ENCODE measurements at regions of chr2 and their contacts with region 1.

Region 1: DNA sequence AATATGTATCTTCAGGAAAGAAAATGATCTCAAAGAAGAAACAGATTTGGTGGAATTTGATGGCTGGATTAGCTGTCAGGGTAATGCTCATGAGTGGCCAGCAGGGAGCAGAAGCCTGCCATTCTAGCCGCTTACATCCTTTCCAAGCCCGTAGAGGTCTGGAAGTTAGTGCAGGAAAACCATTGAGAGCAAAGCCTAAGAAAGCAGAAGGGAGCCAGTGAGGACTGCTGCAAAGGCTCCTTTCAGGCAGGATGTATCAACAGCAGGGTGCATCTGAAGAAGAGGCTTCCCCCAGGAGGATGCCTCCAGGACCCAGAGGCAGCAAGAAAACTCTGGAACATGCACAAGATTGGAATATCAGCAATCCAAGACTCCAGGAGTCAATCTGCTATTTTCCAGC is 22.9 kb upstream of the LBH start:
- DNase-seq: peak; percentile 57 to 77
- H3K4me3 ChIP-seq: no peak overlapping the region
- H3K27ac ChIP-seq: no peak overlapping the region
- H3K4me1 ChIP-seq: peaks cover 0 to 4% (median 2%) of the 10 kb centered on the region in 4 experiments; a peak in 3 of 7 replicates
- H3K27me3 ChIP-seq: no peaks in the 10 kb centered on the region
- CTCF ChIP-seq: peak; percentile 68 to 89 (median 86)
- EP300 ChIP-seq: no peak
- POLR2A ChIP-seq: no peak
- RAD21 ChIP-seq: peak; percentile 98 to 99

Region 2: DNA sequence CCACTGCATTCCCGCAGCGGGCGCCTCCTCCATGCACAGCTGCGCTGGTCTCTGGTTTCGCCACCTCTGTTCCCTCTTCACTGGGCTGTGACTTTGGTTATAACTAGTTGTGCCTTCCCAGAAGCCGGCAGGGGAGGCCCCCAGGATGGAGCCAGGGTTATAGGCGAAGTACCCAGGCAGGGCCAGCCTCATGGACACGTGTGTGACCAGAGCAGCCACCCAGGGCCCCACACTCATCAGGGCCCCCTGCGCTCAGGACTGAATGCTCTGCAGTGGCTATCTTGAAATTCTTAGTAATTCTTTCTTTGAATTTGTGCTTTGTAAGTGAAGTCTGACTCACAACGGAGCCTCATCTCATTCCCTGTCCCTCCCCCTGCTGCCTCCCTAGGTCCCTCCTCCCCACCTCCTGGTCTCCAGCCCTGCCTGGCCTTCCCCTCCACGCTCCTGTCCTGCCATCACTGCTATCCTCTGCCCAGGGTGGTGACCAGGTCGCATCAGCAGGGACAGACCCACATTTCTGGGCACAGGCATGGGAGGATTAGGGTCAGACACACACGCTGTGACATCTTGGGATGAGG is 15.3 kb before region 1 on chr2:
- CTCF ChIA-PET with region 1: interaction called, 11 read pairs
- POLR2A ChIA-PET with region 1: no interaction called
- DNase-seq: no peak
- H3K4me3 ChIP-seq: no peak overlapping the region
- H3K27ac ChIP-seq: no peak overlapping the region
- H3K4me1 ChIP-seq: peaks cover 0 to 11% (median 3%) of the 10 kb centered on the region in 4 experiments; a peak in 3 of 7 replicates
- H3K27me3 ChIP-seq: no peaks in the 10 kb centered on the region
- CTCF ChIP-seq: no peak
- EP300 ChIP-seq: no peak
- POLR2A ChIP-seq: no peak
- RAD21 ChIP-seq: no peak

Region 3: GRCh38 chr2:30231212-30231995 is 23.0 kb after region 1 on chr2 and contains the start of gene LBH:
- CTCF ChIA-PET with region 1: interaction called, 40 read pairs
- POLR2A ChIA-PET with region 1: interaction called, 15 read pairs
- DNase-seq: peak; percentile 66 to 78
- H3K4me3 ChIP-seq: peak within 1 kb of the TSS; percentile 67 to 81 (median 70)
- H3K27ac ChIP-seq: 0 out of 2 replicates have a peak within 1 kb of the TSS, but pooled peaks have one; percentile 7
- H3K4me1 ChIP-seq: peaks cover 0 to 9% (median 5%) of the 10 kb centered on the region in 4 experiments; a peak in 4 of 7 replicates
- H3K27me3 ChIP-seq: peaks cover 3 to 25% (median 20%) of the 10 kb centered on the region in 4 experiments
- CTCF ChIP-seq: no peak
- EP300 ChIP-seq: no peak
- POLR2A ChIP-seq: peak; percentile 95 to 97
- RAD21 ChIP-seq: no peak
- total RNA-seq, gene LBH: 24.6 and 25.7 TPM in 2 replicates

Region 4: DNA sequence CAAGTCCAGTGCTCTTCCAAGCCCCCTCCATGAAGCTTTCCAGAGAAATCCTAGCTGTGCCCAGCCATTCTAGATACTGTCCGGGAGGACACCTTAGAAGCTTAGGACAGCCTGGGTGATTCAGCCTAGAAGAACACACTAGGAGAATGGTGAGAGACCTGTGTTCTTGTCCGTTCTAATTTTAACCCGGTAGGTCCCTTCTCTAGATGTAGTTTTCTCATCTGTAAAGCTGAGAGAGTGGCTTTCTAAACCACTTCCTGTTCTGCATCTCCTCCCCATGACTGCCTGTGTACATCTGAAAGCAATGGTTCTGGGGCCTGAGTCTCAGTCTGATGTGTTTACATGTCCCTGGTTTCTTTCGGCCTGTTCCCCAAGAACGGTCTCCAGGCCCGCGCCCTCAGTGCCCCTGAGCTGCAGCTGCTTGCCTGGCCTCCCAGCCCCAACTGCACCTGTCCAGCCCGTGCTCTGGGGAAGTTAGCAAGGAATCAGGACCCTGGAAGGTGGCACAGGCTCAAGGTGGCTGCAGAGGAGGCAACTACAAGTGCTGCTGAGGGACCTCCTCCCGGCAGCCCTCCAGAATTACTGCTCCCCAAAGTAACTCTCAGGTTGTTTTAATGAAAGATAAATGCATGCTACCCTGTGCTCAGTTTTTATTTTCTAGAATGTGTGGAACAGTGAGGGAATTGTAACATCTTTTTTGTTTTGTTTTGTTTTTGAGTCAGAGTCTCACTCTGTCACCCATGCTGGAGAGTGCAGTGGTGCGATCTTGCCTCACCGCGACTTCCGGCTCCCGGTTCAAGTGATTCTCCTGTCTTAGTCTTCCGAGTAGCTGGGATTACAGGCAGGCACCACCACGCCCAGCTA is 128.8 kb after region 1 on chr2:
- CTCF ChIA-PET with region 1: interaction called, 17 read pairs
- POLR2A ChIA-PET with region 1: no interaction called
- DNase-seq: no peak
- H3K4me3 ChIP-seq: no peak overlapping the region
- H3K27ac ChIP-seq: no peak overlapping the region
- H3K4me1 ChIP-seq: peaks cover 0 to 3% (median 0%) of the 10 kb centered on the region in 4 experiments; a peak in 2 of 7 replicates
- H3K27me3 ChIP-seq: no peaks in the 10 kb centered on the region
- CTCF ChIP-seq: no peak
- EP300 ChIP-seq: no peak
- POLR2A ChIP-seq: no peak
- RAD21 ChIP-seq: no peak

Region 5: DNA sequence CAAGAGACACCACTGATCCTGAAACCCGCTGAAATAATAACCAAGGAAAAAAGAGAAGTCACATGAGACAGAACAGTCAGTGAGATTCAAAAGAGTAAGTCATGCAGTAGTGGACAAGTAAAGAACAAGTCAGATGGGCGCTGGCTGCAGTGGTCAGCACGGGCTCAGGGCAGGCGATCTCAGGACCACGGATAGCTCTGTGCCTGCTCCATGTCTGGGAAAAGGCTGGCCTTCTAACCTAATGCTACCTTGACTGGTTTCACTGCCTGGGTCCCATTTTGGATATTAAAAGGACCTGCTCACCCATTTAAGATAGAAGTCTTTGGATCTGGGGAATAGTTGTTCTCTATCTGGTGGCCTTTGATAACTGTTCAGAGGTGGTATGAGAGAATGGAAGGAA is 176.9 kb after region 1 on chr2:
- CTCF ChIA-PET with region 1: no interaction called
- POLR2A ChIA-PET with region 1: no interaction called
- DNase-seq: peak in 1 of 2 experiments; percentile 63
- H3K4me3 ChIP-seq: no peak overlapping the region
- H3K27ac ChIP-seq: no peak overlapping the region
- H3K4me1 ChIP-seq: no peaks in the 10 kb centered on the region
- H3K27me3 ChIP-seq: no peaks in the 10 kb centered on the region
- CTCF ChIP-seq: no peak
- EP300 ChIP-seq: no peak
- POLR2A ChIP-seq: no peak
- RAD21 ChIP-seq: no peak; a peak in 1 of 4 replicates

Region 6: DNA sequence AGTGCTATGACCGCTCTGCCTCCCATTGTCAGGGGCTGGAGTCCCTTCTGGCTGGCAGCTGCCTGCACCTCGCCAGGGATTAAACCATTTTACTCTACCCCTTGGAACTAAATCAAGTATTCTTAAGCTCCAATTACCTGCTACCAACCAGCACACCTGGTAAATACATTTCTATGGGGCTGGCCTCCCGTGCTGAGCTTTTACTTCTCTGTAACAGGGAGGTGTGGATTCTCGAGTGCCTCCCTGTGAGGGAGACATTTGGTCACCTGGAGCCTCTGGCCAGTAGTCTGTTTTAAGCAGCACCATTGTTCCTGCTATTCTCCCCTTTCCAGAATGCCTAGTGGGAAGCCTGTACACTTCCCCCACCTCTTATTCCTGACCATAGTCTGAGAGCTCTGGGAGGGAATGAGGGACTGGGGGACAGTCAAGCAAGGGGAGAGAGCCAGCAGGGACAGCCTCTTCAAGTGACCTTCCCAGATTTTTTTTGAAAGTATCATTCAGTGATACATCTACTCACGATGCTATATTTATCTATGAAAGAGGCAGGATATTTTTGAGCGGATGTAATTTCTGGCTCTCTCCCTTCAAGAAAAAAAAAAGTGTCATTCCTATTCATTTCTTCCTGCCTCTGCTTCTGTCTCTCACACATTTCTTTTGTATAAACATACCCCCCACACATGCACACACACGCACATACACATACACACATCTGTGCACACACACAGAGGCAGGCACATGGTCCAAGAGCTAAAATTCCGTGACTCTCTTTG is 486.0 kb after region 1 on chr2:
- CTCF ChIA-PET with region 1: interaction called, 19 read pairs
- POLR2A ChIA-PET with region 1: no interaction called
- DNase-seq: peak in 1 of 2 experiments; percentile 13
- H3K4me3 ChIP-seq: no peak overlapping the region
- H3K27ac ChIP-seq: no peak overlapping the region
- H3K4me1 ChIP-seq: no peaks in the 10 kb centered on the region
- H3K27me3 ChIP-seq: no peaks in the 10 kb centered on the region
- CTCF ChIP-seq: no peak
- EP300 ChIP-seq: no peak
- POLR2A ChIP-seq: no peak
- RAD21 ChIP-seq: no peak